ENCODE measurements at regions of chr18 and their contacts with region 1.

Region 1: GRCh38 chr18:23619388-23619881 is 33.1 kb upstream of the NPC1 start:
- DNase-seq: no peak
- H3K4me3 ChIP-seq: peak overlapping the region; percentile 22 to 53 (median 50)
- H3K27ac ChIP-seq: peak overlapping the region; percentile 52 to 85 (median 66)
- H3K4me1 ChIP-seq: peaks cover 0 to 12% (median 9%) of the 10 kb centered on the region in 4 donors
- H3K27me3 ChIP-seq: peaks cover 0 to 33% (median 0%) of the 10 kb centered on the region in 3 donors
- CTCF ChIP-seq: no peak
- EP300 ChIP-seq: no peak
- POLR2A ChIP-seq: no peak

Region 2: GRCh38 chr18:23503038-23503962 is 116.1 kb before region 1 on chr18 and contains the start of gene RMC1:
- intact Hi-C with region 1: no loop called
- DNase-seq: peak; percentile 98
- H3K4me3 ChIP-seq: peak within 1 kb of the TSS; percentile 66 to 100 (median 98)
- H3K27ac ChIP-seq: peak within 1 kb of the TSS; percentile 89 to 96 (median 94)
- H3K4me1 ChIP-seq: peaks cover 0 to 29% (median 24%) of the 10 kb centered on the region in 4 donors
- H3K27me3 ChIP-seq: no peaks in the 10 kb centered on the region
- CTCF ChIP-seq: no peak
- EP300 ChIP-seq: no peak
- POLR2A ChIP-seq: peak; percentile 70 to 91
- total RNA-seq, gene RMC1: 11.8 to 21.6 (median 17.4) TPM

Region 3: GRCh38 chr18:23703057-23703986 is 83.9 kb after region 1 on chr18:
- intact Hi-C with region 1: loop called (anchors 5 kb)
- DNase-seq: no peak
- H3K4me3 ChIP-seq: no peak overlapping the region
- H3K27ac ChIP-seq: no peak overlapping the region
- H3K4me1 ChIP-seq: no peaks in the 10 kb centered on the region
- H3K27me3 ChIP-seq: no peaks in the 10 kb centered on the region
- CTCF ChIP-seq: peak in 2 of 4 experiments; percentile 17 to 28
- EP300 ChIP-seq: no peak
- POLR2A ChIP-seq: no peak

Region 4: GRCh38 chr18:23812546-23813440 is 193.4 kb after region 1 on chr18:
- intact Hi-C with region 1: loop called (anchors 2 kb)
- DNase-seq: no peak
- H3K4me3 ChIP-seq: no peak overlapping the region
- H3K27ac ChIP-seq: no peak overlapping the region
- H3K4me1 ChIP-seq: no peaks in the 10 kb centered on the region
- H3K27me3 ChIP-seq: no peaks in the 10 kb centered on the region
- CTCF ChIP-seq: peak in 3 of 4 experiments; percentile 45 to 62 (median 50)
- EP300 ChIP-seq: no peak
- POLR2A ChIP-seq: no peak

Region 5: GRCh38 chr18:24118750-24119577 is 499.5 kb after region 1 on chr18:
- intact Hi-C with region 1: loop called (anchors 1 kb)
- DNase-seq: peak; percentile 75
- H3K4me3 ChIP-seq: no peak overlapping the region
- H3K27ac ChIP-seq: no peak overlapping the region
- H3K4me1 ChIP-seq: no peaks in the 10 kb centered on the region
- H3K27me3 ChIP-seq: no peaks in the 10 kb centered on the region
- CTCF ChIP-seq: peak; percentile 49 to 87 (median 81)
- EP300 ChIP-seq: no peak
- POLR2A ChIP-seq: no peak

Measured in sigmoid colon (tissue), 7 donors.